Activated CD4-positive, alpha-beta memory T cell treated with anti-CD3 and anti-CD28 coated beads for 36 hours (primary cell): ENCODE measurements at regions of chr9 and their contacts with region 1.

Region 1: GRCh38 chr9:91720751-91721705 is 229.0 kb downstream of the ROR2 start:
- DNase-seq: no peak
- H3K4me3 Mint-ChIP-seq: no peak overlapping the region
- H3K27ac Mint-ChIP-seq: no peak overlapping the region
- H3K4me1 Mint-ChIP-seq: no peaks in the 10 kb centered on the region
- H3K27me3 Mint-ChIP-seq: peaks cover 45% of the 10 kb centered on the region

Region 2: GRCh38 chr9:91689006-91689405 is 32.0 kb before region 1 on chr9:
- CTCF ChIA-PET with region 1: interaction called, 4 read pairs
- POLR2A ChIA-PET with region 1: no interaction called
- intact Hi-C with region 1: loop called (anchors 5 kb)
- DNase-seq: no peak
- H3K4me3 Mint-ChIP-seq: no peak overlapping the region
- H3K27ac Mint-ChIP-seq: no peak overlapping the region
- H3K4me1 Mint-ChIP-seq: no peaks in the 10 kb centered on the region
- H3K27me3 Mint-ChIP-seq: peaks cover 2% of the 10 kb centered on the region

Region 3: GRCh38 chr9:91734371-91734981 is 13.4 kb after region 1 on chr9:
- CTCF ChIA-PET with region 1: interaction called, 18 read pairs
- POLR2A ChIA-PET with region 1: interaction called, 3 read pairs
- intact Hi-C with region 1: no loop called
- DNase-seq: peak; percentile 68
- H3K4me3 Mint-ChIP-seq: no peak overlapping the region
- H3K27ac Mint-ChIP-seq: no peak overlapping the region
- H3K4me1 Mint-ChIP-seq: peaks cover 3% of the 10 kb centered on the region
- H3K27me3 Mint-ChIP-seq: peaks cover 10% of the 10 kb centered on the region